Dorsolateral prefrontal cortex (tissue), 120 donors: ENCODE measurements at regions of chr3 and their contacts with region 1.

Region 1: GRCh38 chr3:33113772-33114621 is at the start of gene CRTAP:
- DNase-seq: peak; percentile 82 to 94 (median 90)
- H3K4me3 ChIP-seq: peak within 1 kb of the TSS; percentile 56 to 91 (median 80)
- H3K27ac ChIP-seq: peak within 1 kb of the TSS; percentile 73 to 99 (median 95)
- H3K27me3 ChIP-seq: no peaks in the 10 kb centered on the region
- CTCF ChIP-seq: peak in 18 of 56 donors; percentile 6 to 33 (median 18)
- total RNA-seq, gene CRTAP: 49.8 to 139 (median 75.7) TPM

Region 2: DNA sequence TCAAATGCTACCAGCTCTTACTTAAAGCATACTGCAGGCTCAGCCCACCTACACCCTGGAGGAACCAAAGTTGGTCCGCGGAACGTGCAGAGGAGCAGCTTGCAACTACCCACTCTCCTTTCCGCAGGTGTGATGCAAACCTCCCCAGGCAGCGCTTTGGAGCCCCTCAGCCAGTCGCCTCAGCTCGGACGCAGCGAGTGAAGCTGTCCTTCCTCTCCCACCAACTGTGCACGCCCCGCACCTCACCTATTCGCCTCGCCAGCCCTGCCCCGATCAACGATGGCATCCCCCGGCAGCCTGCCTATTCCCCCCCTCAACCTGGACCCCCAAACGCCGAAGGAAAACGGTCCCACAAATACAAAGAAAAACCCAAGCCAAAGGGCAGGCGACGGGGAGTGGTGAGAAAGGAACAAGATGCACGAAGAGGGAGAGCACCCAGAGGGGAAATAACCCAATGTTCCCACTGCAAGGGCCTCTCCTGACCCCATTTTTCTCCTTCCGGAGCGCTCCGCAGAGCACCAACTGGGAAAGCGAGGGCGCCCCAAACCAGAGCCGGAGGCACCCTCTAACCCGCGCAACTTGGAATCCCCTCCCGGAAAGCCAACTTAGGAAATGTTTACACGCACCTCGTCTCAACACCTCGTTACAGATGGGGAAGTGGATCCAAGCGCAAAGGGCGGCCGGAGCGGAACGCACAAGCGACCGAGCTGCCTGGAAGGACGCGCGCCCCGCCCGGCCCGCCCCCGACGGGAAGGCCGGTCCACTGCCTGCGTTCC is 17.7 kb before region 1 on chr3:
- intact Hi-C with region 1: loop called (anchors 1 kb)
- DNase-seq: peak in 7 of 10 donors; percentile 44 to 66 (median 54)
- H3K4me3 ChIP-seq: peak overlapping the region; percentile 68 to 100 (median 94)
- H3K27ac ChIP-seq: peak overlapping the region; percentile 10 to 97 (median 90)
- H3K27me3 ChIP-seq: no peaks in the 10 kb centered on the region
- CTCF ChIP-seq: no peak

Region 3: DNA sequence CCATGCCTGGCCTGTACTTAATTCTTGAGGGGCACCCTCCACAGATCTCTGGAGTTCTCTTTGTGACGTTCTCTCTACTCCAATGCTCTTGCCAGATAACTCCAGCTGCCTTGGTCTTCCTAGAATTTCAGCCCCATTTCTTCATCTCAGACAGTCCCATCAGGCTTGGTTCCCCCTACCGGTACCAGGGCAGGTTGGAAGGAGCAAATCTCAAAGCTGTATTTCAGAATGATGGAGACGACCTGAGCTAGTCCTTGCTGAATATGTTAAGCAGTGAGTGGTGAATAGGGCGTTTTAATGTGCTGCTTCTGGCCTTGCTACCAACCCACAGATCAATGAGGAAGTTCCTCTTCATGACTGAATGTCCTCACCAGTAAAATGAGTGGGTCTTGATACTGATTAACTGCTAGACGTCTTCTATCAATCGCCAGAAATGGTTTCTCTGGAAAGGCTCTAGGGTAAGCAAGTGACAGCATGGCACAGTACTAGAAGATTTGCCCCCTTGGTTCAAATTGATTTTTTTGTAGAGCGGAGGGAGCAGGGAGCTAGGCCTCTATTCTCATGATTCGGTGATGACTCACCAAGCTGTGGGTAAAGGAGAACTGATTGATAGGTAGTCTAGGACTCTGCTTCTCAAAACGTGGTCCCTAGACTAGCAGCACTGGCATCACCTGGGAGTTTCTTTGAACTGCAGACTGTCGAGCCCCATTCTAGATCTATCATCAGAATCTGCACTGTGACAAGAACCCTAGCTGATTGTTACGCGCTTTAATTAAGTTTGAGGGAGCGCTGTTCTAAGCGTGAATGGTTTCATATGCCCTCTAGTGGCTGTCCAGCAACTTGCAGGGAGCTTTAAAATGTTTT is 258.5 kb after region 1 on chr3:
- intact Hi-C with region 1: loop called in 1 of 2 experiments (anchors 5 kb)
- DNase-seq: peak in 3 of 10 donors; percentile 34 to 62 (median 44)
- H3K4me3 ChIP-seq: peak overlapping the region in 17 of 59 donors; percentile 1 to 49 (median 9)
- H3K27ac ChIP-seq: peak overlapping the region in 2 of 59 donors; percentile 4 to 14
- H3K27me3 ChIP-seq: no peaks in the 10 kb centered on the region
- CTCF ChIP-seq: peak; percentile 78 to 98 (median 91)